BJ (cell line): ENCODE measurements at regions of chr3 and their contacts with region 1.

Region 1: GRCh38 chr3:178732820-178733219 is 196.6 kb downstream of the KCNMB2 start:
- DNase-seq: no peak
- H3K4me3 ChIP-seq: no peak overlapping the region
- H3K27me3 ChIP-seq: no peaks in the 10 kb centered on the region
- CTCF ChIP-seq: no peak

Region 2: GRCh38 chr3:178690571-178690970 is 42.2 kb before region 1 on chr3:
- CTCF ChIA-PET with region 1: no interaction called
- POLR2A ChIA-PET with region 1: interaction called, 10 read pairs
- DNase-seq: no peak
- H3K4me3 ChIP-seq: no peak overlapping the region
- H3K27me3 ChIP-seq: no peaks in the 10 kb centered on the region
- CTCF ChIP-seq: no peak

Region 3: GRCh38 chr3:178845420-178846118 is 112.7 kb after region 1 on chr3:
- CTCF ChIA-PET with region 1: no interaction called
- POLR2A ChIA-PET with region 1: no interaction called
- DNase-seq: peak; percentile 37
- H3K4me3 ChIP-seq: no peak overlapping the region
- H3K27me3 ChIP-seq: no peaks in the 10 kb centered on the region
- CTCF ChIP-seq: no peak